Right ventricle myocardium inferior (tissue), 1 donor: ENCODE measurements at regions of chr12 and their contacts with region 1.

Region 1: GRCh38 chr12:70576346-70577282 is 60.6 kb downstream of the PTPRB start:
- DNase-seq: no peak
- ATAC-seq: no peak

Region 2: DNA sequence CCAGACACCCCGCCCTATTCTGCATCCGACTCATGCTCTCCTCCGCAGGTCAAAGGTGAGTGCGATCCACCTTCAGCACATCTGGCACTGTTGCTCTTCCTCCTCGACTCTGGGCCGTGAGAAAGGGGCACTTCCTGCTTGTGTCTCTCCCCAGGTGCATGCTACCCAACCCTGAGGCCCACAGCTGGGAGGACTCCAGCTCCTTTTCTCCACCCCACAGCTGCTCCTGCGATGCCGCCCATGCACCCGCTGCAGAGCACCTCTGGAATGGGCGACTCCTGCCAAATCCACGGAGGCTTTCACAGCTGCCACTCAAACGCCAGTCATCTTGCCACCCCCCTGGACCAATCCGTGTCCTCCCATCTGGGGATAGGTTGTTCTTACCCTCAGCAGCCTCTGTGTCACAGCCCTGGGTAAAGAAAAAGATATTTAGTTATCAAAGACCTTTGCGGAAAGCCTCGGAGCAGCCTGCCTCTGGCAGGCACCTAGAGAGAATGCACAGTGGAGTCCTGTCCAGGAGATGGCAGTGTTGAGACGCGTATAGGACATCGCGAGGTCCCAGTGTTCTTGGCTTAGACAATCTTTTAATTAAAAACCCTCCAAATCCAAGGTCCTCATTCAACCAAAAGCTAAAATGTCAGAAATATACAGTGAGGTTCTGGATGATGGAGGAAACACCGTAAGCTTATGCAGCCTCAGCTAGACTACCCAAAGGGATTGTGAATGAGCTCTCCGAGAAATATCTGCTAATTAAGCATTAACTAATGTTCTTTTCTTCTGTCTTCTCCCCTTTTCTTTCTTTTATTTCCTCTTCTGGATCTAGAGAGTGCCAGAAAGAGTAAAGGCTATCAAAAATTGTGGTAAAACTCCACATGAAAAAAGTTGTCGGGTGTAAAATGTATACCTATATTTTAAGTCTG is 697.3 kb before region 1 on chr12:
- intact Hi-C with region 1: loop called (anchors 1 kb)
- DNase-seq: peak; percentile 72
- ATAC-seq: peak; percentile 95

Region 3: DNA sequence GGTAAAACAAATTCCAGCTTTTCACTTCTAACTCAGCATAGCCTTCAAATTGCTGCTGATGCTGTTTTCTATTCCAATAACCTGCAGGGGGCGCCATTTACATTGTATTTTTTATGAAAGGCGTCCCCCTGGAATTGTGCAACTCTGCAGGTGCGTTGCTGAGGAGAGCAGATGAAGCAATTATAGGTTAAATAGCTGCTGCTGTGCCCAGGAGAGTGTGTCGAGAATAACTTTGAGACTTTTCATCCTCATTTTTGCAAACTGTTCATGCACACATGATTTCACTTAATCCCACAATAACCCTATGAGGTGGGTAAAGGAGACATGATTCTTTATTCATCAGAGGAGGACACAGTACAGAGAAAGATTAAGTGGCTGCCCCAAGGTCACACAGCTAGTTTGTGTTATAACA is 675.9 kb before region 1 on chr12:
- intact Hi-C with region 1: loop called (anchors 2 kb)
- DNase-seq: no peak
- ATAC-seq: peak; percentile 46

Region 4: GRCh38 chr12:70365648-70366518 is 210.7 kb before region 1 on chr12 and contains the start of gene KCNMB4:
- intact Hi-C with region 1: loop called (anchors 10 kb)
- DNase-seq: peak; percentile 86
- ATAC-seq: peak; percentile 88
- total RNA-seq, gene KCNMB4: 1.6 TPM